Ascending aorta (tissue), 2 donors: ENCODE measurements at regions of chr17 and their contacts with region 1.

Region 1: GRCh38 chr17:78341559-78342448 is 18.1 kb downstream of the SOCS3 start:
- DNase-seq: peak; percentile 49 to 87
- H3K4me3 ChIP-seq: peak overlapping the region; percentile 43 to 72
- H3K27ac ChIP-seq: peak overlapping the region; percentile 99
- H3K4me1 ChIP-seq: peaks cover 17 to 22% of the 10 kb centered on the region in 2 donors
- H3K27me3 ChIP-seq: no peaks in the 10 kb centered on the region
- CTCF ChIP-seq: no peak

Region 2: GRCh38 chr17:78313735-78314648 is 27.8 kb before region 1 on chr17:
- intact Hi-C with region 1: loop called (anchors 1 kb)
- DNase-seq: peak in 1 of 2 donors; percentile 84
- H3K4me3 ChIP-seq: peak overlapping the region; percentile 62 to 78
- H3K27ac ChIP-seq: peak overlapping the region; percentile 81 to 83
- H3K4me1 ChIP-seq: peaks cover 18 to 27% of the 10 kb centered on the region in 2 donors
- H3K27me3 ChIP-seq: no peaks in the 10 kb centered on the region
- CTCF ChIP-seq: peak in 1 of 3 experiments; percentile 4

Region 3: GRCh38 chr17:78324391-78325075 is 17.3 kb before region 1 on chr17:
- intact Hi-C with region 1: loop called (anchors 1 kb)
- DNase-seq: peak; percentile 53 to 92
- H3K4me3 ChIP-seq: peak overlapping the region in 1 of 2 donors; percentile 27
- H3K27ac ChIP-seq: peak overlapping the region; percentile 58 to 83
- H3K4me1 ChIP-seq: peaks cover 0 to 12% of the 10 kb centered on the region in 2 donors
- H3K27me3 ChIP-seq: no peaks in the 10 kb centered on the region
- CTCF ChIP-seq: no peak

Region 4: DNA sequence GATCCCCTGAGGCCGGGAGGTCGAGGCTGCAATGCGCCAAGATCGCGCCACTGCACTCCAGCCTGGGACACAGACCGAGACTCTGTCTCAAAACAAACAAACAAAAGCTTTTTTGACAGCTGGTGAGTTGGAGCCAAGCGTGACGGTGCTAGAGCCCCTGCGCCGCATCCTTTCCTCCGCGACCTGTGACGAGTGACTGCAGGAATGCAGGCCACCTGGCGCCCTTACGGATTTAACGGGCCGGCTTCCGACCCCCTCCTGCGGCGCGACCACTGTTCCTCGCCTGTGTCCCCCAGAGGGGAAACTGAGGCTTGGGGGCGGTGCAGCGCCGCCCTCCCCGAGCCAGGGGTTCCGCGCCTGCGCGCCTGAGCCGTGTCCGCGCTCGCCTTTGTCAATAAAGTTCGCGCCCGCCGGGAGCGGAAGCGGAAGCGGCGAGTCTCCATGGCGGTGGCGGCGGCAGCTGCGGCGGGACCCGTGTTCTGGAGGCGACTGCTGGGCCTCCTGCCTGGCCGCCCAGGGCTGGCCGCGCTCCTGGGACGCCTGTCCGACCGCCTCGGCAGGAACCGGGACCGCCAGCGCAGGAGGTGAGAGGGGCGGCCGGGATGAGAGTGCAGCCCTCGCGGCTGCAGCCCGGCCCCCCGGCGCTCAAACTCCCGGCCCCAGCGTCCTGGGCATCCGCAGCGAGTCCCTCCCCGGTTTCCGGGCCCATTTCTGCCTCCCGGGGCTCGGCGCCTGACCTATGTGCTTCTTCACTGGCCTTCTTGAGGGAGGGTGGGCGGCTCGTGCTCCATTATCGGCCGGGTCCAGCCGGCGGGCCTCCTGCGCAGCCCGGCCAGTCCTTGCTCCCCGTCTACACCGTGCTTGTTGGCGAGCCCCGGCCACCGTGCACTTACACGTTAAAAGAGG is 36.7 kb after region 1 on chr17 and contains the start of gene PGS1:
- intact Hi-C with region 1: loop called (anchors 2 kb)
- DNase-seq: peak in 1 of 2 donors; percentile 89
- H3K4me3 ChIP-seq: peak within 1 kb of the TSS; percentile 86 to 97
- H3K27ac ChIP-seq: peak within 1 kb of the TSS; percentile 89 to 94
- H3K4me1 ChIP-seq: peaks cover 18 to 23% of the 10 kb centered on the region in 2 donors
- H3K27me3 ChIP-seq: no peaks in the 10 kb centered on the region
- CTCF ChIP-seq: no peak
- total RNA-seq, gene PGS1: 41.8 TPM

Region 5: DNA sequence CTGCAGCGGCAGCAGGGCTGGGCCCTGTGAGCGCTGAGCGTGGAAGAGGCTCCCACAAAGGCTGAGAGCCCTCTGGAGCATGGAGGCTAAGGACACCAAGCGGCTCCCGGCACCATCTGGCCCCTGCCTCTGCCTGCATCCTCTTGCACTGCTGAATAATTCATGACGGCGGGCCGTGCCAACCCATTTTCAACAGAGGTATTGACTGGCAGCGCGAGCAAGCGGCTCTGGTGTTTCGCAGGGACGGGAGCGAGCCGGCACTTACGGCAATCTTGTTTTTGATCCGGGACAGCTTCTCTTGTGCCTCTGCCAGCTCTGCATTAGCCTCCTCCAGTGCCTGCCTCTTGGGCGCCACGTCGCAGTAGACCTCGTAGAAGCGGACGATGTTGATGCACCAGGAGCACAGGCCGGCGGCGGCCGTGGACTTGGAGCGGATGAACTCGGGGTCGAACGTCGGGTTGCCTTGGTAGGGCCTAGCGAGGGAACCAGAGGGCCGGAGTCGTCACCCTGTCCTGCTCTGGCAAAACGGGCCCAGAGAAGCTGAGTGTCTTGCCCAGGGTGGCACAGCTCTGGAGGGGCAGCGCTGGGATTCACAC is 117.0 kb after region 1 on chr17:
- intact Hi-C with region 1: no loop called
- DNase-seq: no peak
- H3K4me3 ChIP-seq: no peak overlapping the region
- H3K27ac ChIP-seq: no peak overlapping the region
- H3K4me1 ChIP-seq: no peaks in the 10 kb centered on the region
- H3K27me3 ChIP-seq: no peaks in the 10 kb centered on the region
- CTCF ChIP-seq: no peak